Heart left ventricle (tissue), 16 donors: ENCODE measurements at regions of chr9 and their contacts with region 1.

Region 1: DNA sequence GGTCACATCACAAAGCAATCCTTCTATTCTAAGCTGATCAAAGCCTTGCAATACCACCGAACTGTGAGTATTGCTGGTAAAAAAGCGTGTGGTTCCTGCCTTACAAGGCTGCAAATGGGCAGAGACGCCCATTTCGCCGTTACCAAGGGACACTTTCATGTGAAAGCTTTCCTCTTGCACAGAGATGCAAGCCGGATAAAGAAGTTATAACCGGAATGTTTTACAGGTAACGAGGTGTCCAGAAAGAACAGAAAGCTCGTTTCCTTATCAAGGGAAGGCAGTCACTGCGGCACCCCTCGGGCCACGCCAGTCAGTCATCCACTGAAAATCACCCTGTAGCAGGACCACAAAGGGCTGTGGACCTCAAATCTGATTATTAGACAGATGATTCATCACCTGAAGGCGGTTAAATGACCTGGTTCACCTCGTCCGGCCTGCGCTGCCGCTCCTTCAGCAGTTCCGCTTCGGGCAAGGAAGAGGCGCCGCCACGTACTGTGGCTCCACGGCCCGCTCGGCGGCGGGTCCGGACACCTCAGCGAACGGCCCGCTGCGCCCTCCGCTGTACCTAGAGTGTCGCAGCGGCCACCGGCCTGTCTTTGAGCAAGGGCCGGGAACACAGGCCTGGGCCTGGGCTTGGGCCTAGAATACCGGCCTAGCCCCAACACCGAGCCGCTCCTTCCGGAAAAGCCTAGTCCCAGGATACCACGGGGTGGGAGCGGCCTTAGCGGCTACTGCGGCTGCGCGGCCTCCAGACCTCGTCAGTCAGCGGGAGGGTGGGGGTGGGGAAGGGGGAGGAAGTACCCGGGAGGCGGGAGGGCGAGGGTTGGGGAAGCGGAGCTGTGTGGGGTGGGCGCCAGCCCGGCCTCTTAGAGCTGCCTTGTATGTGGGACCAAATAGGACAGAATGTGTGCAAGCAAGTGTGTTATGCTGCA is at the start of gene KLHL9:
- DNase-seq: peak; percentile 94 to 97 (median 95)
- ATAC-seq: peak; percentile 99 to 100 (median 100)
- H3K4me3 ChIP-seq: peak within 1 kb of the TSS; percentile 69 to 97 (median 82)
- H3K27ac ChIP-seq: peak within 1 kb of the TSS; percentile 91 to 99 (median 94)
- H3K4me1 ChIP-seq: peaks cover 12 to 50% (median 44%) of the 10 kb centered on the region in 12 donors
- H3K27me3 ChIP-seq: peaks cover 0 to under 1% (median 0%) of the 10 kb centered on the region in 9 donors
- CTCF ChIP-seq: peak in 1 of 12 donors; percentile 22
- POLR2A ChIP-seq: peak in 1 of 2 donors; percentile 59
- total RNA-seq, gene KLHL9: 10.7 to 15.1 (median 11.8) TPM

Region 2: DNA sequence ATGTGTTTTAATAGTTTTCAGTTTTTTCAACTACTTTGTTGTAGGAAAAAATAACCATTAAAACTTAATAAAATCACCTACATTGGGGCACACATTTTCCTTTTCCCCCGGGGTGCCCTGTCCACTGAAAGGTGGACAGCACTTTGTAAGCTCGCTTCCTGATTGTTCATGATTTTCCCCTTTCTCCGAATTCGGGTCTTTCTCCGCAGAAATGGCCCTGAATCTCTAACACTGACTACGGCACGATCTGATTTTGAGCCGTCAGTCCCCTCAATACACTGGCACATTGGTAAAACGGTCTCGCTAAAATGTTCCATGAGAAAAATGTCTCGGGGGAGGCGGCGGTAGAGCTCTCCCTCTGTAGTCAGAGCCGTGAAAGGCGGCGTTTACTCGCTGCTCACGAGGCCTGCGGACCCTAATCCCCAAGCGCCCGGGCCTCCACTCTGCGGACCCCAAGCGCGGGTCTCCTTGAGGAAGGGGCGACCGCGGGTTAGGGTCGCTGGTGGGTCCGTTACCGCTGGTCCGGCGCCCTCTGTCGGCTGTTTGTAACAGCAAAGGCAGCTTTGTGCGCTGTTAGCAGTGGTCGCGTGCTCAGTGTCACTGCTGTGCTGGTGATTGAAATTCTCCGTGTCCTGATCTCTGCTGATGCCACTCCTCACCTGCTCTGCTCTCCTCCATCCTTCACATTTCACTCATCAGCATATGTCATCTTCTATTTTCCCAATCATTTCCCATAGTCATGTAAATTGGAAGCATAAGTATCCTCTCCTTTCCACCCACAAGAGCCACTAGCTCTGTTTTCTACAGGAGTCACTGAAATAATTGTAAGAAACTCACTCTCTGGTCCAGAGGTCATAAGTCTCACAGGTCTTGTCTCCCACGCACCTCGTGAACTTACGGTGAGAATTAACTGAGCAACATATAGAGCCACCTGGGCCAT is 61.1 kb after region 1 on chr9:
- intact Hi-C with region 1: loop called in 3 of 10 experiments (anchors 5 kb)
- DNase-seq: peak; percentile 30 to 76 (median 52)
- ATAC-seq: peak in 3 of 4 donors; percentile 65 to 78 (median 69)
- H3K4me3 ChIP-seq: peak overlapping the region in 11 of 12 donors; percentile 35 to 59 (median 51)
- H3K27ac ChIP-seq: no peak overlapping the region
- H3K4me1 ChIP-seq: peaks cover 0 to 12% (median 0%) of the 10 kb centered on the region in 12 donors
- H3K27me3 ChIP-seq: peaks cover 0 to 86% (median 37%) of the 10 kb centered on the region in 9 donors
- CTCF ChIP-seq: peak; percentile 66 to 87 (median 78)
- POLR2A ChIP-seq: no peak

Region 3: GRCh38 chr9:21796768-21797167 is 461.8 kb after region 1 on chr9:
- intact Hi-C with region 1: loop called in 3 of 10 experiments (anchors 2 to 5 kb)
- DNase-seq: no peak
- ATAC-seq: no peak
- H3K4me3 ChIP-seq: no peak overlapping the region
- H3K27ac ChIP-seq: no peak overlapping the region
- H3K4me1 ChIP-seq: peaks cover 0 to 6% (median 3%) of the 10 kb centered on the region in 12 donors
- H3K27me3 ChIP-seq: peaks cover 0 to 55% (median 10%) of the 10 kb centered on the region in 9 donors
- CTCF ChIP-seq: no peak
- POLR2A ChIP-seq: no peak

Region 4: GRCh38 chr9:21802195-21803000 is 467.4 kb after region 1 on chr9 and contains the start of gene MTAP:
- intact Hi-C with region 1: loop called in 2 of 10 experiments (anchors 2 to 5 kb)
- DNase-seq: peak; percentile 93 to 96 (median 93)
- ATAC-seq: peak; percentile 94 to 99 (median 98)
- H3K4me3 ChIP-seq: peak within 1 kb of the TSS; percentile 64 to 96 (median 82)
- H3K27ac ChIP-seq: peak within 1 kb of the TSS; percentile 79 to 95 (median 86)
- H3K4me1 ChIP-seq: peaks cover 0 to 37% (median 26%) of the 10 kb centered on the region in 12 donors
- H3K27me3 ChIP-seq: peaks cover 0 to 11% (median 0%) of the 10 kb centered on the region in 9 donors
- CTCF ChIP-seq: no peak
- POLR2A ChIP-seq: peak in 1 of 2 donors; percentile 90
- total RNA-seq, gene MTAP: 12.6 to 27.3 (median 19.4) TPM